IMR-90 (cell line): ENCODE measurements at regions of chr9 and their contacts with region 1.

Region 1: DNA sequence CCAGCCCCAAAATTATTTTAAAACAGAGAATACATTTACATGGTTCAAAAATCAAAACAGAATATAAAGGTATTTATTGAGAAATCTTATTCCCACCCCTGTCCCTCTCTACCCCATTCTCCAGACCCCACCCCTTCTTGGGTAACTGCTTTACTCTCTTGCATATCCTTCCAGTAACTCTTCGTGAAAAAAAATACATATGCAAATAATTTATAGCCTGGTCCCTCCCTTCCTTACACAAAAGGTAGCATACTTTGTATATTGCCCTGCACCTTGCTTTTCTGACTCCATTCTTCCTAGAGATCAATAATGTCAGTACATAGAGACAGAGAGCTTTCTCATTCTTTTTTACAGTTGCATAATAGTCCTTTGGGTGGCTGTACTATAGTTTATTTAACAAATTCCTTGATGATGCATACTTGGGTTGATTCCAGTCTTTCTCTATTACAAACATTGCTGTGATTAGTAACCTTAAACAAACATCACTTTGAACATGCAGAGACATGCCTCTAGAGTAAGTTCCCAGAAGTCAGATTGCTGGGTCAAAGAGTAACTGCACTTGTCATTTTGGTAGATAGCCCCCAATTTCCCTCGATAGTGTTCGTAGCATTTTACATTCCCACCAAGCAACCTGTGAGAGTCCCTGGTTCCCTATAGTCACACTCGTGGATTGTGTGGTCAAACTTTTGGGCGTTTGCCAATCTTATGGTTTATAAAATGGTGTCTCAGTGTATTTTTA is 47.8 kb downstream of the STOM start:
- DNase-seq: peak; percentile 98
- ATAC-seq: peak; percentile 55
- H3K4me3 ChIP-seq: no peak overlapping the region
- H3K27ac ChIP-seq: peak overlapping the region; percentile 99
- H3K4me1 ChIP-seq: peaks cover 15% of the 10 kb centered on the region
- H3K27me3 ChIP-seq: no peaks in the 10 kb centered on the region
- CTCF ChIP-seq: no peak
- POLR2A ChIP-seq: no peak
- RAD21 ChIP-seq: no peak

Region 2: DNA sequence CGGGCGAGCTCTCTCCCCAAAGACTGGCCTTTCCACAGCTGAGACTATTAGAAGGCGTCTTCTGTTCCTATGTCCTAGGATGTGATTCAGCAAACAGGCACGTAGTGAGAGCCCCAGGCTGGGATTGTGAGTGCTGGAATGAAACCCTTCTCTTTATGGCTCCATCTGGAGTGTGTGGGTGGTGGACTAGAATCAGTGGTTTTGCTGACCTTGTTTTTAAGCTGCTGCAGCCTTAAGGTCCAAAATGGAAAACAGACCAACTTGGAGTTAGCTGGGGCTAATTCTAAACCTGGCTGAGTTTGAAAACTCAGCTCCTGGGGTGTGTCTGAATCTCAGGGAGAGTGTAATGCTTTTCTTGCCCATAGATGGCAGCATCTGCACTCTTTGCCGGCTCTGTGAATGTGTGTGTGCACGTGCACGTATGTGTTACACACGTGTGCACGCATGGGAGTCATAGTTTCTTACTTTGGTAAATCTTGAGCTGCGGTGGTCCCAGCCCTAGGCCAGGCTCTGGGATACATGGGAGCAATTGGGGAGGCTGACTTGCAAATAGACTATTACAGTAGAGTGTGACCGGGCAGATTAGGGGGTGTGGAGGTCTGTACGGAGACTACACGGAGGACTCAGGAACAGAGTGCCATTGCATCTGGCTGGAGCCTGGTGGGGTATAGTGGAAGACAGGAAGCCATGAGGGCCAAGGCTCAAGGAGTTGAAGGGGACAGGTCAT is 43.5 kb before region 1 on chr9:
- CTCF ChIA-PET with region 1: interaction called, 9 read pairs
- POLR2A ChIA-PET with region 1: no interaction called
- dilution Hi-C with region 1: no loop called
- in situ Hi-C with region 1: no loop called
- intact Hi-C with region 1: loop called (anchors 2 kb)
- DNase-seq: peak; percentile 99
- ATAC-seq: peak; percentile 85
- H3K4me3 ChIP-seq: no peak overlapping the region
- H3K27ac ChIP-seq: peak overlapping the region; percentile 87
- H3K4me1 ChIP-seq: peaks cover 48% of the 10 kb centered on the region
- H3K27me3 ChIP-seq: no peaks in the 10 kb centered on the region
- CTCF ChIP-seq: peak; percentile 72
- POLR2A ChIP-seq: no peak; the same call in 1 of the 2 replicates
- RAD21 ChIP-seq: peak; percentile 65

Region 3: DNA sequence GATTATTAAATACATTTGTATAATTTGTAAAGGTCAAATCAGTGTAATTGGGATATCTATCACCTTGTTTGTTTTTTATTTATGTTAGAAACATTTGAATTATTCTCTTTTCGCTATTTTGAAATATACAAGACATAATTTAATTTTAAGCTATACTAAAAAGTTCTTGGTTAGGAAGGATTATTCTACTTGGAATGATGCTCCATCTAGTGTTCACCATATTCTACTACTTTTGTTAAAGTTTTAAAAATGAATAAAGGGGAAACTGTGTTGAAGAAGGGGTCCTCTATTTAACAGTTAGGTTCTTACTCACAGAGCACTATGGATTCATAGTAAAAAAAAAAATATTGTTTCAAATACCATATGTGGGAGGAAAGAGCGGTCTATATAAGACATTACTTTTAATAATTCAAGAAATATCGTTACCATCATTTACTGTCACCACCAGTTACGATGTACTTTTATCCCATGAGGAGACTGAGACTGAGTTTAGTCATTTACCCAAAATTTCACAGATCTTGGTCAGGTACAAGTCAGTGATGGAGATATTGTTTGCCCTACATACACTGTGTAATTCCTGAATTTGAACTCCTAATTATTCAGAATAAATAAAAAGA is 54.1 kb after region 1 on chr9:
- CTCF ChIA-PET with region 1: interaction called, 9 read pairs
- POLR2A ChIA-PET with region 1: no interaction called
- dilution Hi-C with region 1: no loop called
- in situ Hi-C with region 1: no loop called
- intact Hi-C with region 1: loop called (anchors 1 kb)
- DNase-seq: peak; percentile 46
- ATAC-seq: no peak
- H3K4me3 ChIP-seq: no peak overlapping the region
- H3K27ac ChIP-seq: no peak overlapping the region
- H3K4me1 ChIP-seq: peaks cover 11% of the 10 kb centered on the region
- H3K27me3 ChIP-seq: no peaks in the 10 kb centered on the region
- CTCF ChIP-seq: peak; percentile 66
- POLR2A ChIP-seq: no peak
- RAD21 ChIP-seq: peak; percentile 58

Region 4: DNA sequence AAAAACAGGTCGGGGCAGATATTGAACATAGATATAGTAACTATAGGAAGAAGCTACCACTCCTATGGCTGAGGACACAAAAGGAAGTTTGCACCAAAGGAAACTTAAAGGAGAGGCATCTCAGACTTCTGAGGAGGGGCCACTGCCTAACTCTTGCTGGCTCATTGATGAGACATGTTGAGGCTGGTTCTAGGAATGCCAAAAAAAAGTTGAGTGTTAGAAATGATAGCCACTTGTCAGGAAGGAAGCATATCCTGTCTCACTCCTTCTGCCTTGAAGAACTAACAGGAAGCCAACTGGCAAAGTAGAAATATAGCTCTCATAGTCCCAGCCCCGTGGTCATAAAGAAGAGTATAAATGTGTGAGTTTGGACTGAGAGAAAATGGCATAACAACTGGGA is 71.1 kb after region 1 on chr9:
- CTCF ChIA-PET with region 1: interaction called, 26 read pairs
- POLR2A ChIA-PET with region 1: interaction called, 3 read pairs
- dilution Hi-C with region 1: no loop called
- in situ Hi-C with region 1: loop called (anchors 5 kb)
- intact Hi-C with region 1: no loop called
- DNase-seq: peak; percentile 39
- ATAC-seq: no peak
- H3K4me3 ChIP-seq: no peak overlapping the region
- H3K27ac ChIP-seq: 0 out of 2 replicates have a peak overlapping the region, but pooled peaks have one; percentile 0
- H3K4me1 ChIP-seq: peaks cover 6% of the 10 kb centered on the region
- H3K27me3 ChIP-seq: no peaks in the 10 kb centered on the region
- CTCF ChIP-seq: no peak
- POLR2A ChIP-seq: no peak
- RAD21 ChIP-seq: no peak

Region 5: GRCh38 chr9:121399883-121400607 is 77.8 kb after region 1 on chr9:
- CTCF ChIA-PET with region 1: interaction called, 26 read pairs
- POLR2A ChIA-PET with region 1: interaction called, 3 read pairs
- dilution Hi-C with region 1: no loop called
- in situ Hi-C with region 1: loop called (anchors 5 kb)
- intact Hi-C with region 1: loop called (anchors 1 kb)
- DNase-seq: peak; percentile 86
- ATAC-seq: peak; percentile 27
- H3K4me3 ChIP-seq: no peak overlapping the region
- H3K27ac ChIP-seq: no peak overlapping the region
- H3K4me1 ChIP-seq: peaks cover 11% of the 10 kb centered on the region
- H3K27me3 ChIP-seq: no peaks in the 10 kb centered on the region
- CTCF ChIP-seq: peak; percentile 81
- POLR2A ChIP-seq: no peak
- RAD21 ChIP-seq: peak; percentile 84